ENCODE measurements at regions of chr10 and their contacts with region 1.

Region 1: DNA sequence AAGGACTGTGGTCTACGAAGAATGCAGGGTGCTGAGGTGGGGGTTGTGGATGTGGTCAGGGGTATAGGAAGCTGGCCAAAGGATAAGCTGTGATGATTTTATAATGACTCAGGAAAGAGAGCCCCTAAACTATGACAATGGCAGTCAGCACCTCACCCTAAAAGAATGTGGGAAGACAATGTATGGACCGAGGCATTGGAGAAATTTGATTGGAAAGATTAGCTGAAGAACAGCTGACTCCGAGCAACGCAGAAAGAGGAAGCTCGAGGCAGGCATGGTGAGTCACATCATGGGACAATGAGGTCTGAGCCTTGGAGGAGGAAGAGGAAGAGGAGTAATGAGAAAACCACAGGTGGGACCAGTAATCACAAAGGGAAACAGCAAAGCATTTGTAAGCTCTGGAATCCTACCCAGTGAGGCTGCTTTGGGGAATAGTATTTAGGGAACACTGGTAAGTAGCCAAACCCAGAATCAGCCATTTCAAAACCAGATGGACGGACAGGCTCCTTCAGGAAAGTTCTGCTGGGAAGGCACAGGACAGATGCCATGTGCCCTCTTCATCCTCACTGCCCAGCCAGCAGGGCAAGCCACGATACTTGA is 295.4 kb downstream of the PRPF18 start:
- DNase-seq: peak; percentile 65 to 86
- H3K4me3 ChIP-seq: peak overlapping the region in 3 of 4 experiments; percentile 20 to 35 (median 26); a peak in 4 of 8 replicates
- H3K27ac ChIP-seq: peak overlapping the region; percentile 85
- H3K4me1 ChIP-seq: peaks cover 14 to 24% (median 20%) of the 10 kb centered on the region in 4 experiments
- H3K27me3 ChIP-seq: no peaks in the 10 kb centered on the region
- CTCF ChIP-seq: no peak
- EP300 ChIP-seq: peak in 1 of 2 experiments; percentile 67; a peak in 1 of 3 replicates
- POLR2A ChIP-seq: peak; percentile 72 to 81
- RAD21 ChIP-seq: peak in 1 of 2 experiments; percentile 6; a peak in 1 of 4 replicates

Region 2: DNA sequence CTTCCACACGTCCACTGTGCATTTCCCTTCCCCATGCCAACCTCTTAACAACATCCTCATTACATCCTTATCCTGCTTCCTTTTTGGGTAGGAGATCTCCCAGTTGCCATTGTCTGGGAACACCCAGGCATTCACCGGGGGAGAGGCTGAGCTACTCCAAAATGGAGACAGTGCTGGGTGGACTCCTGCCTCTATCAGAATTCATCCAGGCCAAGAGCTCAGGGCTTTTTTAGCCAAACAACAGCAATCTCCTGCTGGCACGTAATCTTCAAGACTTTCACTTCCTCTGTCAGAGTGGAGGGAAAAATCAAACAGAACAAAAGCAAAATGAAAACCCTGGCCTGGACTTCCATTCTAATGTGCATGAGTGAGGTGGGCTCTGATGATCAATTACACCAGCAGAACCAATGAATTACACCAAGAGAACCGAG is 50.5 kb before region 1 on chr10:
- CTCF ChIA-PET with region 1: interaction called, 10 read pairs
- POLR2A ChIA-PET with region 1: no interaction called
- DNase-seq: no peak
- H3K4me3 ChIP-seq: no peak overlapping the region
- H3K27ac ChIP-seq: peak overlapping the region; percentile 34; the same call in 1 of the 2 replicates
- H3K4me1 ChIP-seq: peaks cover 7 to 25% (median 13%) of the 10 kb centered on the region in 4 experiments; a peak in 6 of 7 replicates
- H3K27me3 ChIP-seq: no peaks in the 10 kb centered on the region
- CTCF ChIP-seq: no peak
- EP300 ChIP-seq: no peak
- POLR2A ChIP-seq: no peak
- RAD21 ChIP-seq: no peak

Region 3: DNA sequence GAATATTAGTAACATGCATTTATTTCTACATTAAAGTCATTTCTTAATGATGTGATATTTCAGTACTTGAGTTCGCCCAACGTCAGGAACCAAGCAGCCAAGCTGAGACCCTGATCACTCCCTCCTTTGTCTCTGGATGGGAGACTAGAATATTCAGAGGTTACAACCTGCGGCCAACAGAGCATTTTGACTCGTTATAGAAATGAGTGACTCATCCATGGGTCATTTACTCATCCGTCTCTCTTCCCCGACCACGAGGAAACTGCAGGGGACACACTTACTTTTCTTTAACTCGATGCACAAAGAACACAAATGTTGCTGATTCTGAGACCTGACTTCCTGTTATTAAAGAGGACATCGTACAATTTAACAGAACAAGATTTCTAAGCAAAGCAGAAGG is 105.2 kb after region 1 on chr10:
- CTCF ChIA-PET with region 1: no interaction called
- POLR2A ChIA-PET with region 1: no interaction called
- DNase-seq: no peak
- H3K4me3 ChIP-seq: no peak overlapping the region
- H3K27ac ChIP-seq: no peak overlapping the region
- H3K4me1 ChIP-seq: peaks cover 0 to 4% (median 0%) of the 10 kb centered on the region in 4 experiments; a peak in 1 of 7 replicates
- H3K27me3 ChIP-seq: no peaks in the 10 kb centered on the region
- CTCF ChIP-seq: no peak
- EP300 ChIP-seq: no peak
- POLR2A ChIP-seq: no peak
- RAD21 ChIP-seq: no peak